ENCODE measurements at regions of chr1 and their contacts with region 1.

Region 1: GRCh38 chr1:165339164-165339563 is 17.4 kb downstream of the LMX1A start:
- DNase-seq: no peak
- H3K4me3 ChIP-seq: no peak overlapping the region
- H3K27ac ChIP-seq: no peak overlapping the region
- H3K4me1 ChIP-seq: no peaks in the 10 kb centered on the region
- H3K27me3 ChIP-seq: peaks cover 0 to 5% of the 10 kb centered on the region in 2 donors
- CTCF ChIP-seq: no peak
- POLR2A ChIP-seq: no peak

Region 2: DNA sequence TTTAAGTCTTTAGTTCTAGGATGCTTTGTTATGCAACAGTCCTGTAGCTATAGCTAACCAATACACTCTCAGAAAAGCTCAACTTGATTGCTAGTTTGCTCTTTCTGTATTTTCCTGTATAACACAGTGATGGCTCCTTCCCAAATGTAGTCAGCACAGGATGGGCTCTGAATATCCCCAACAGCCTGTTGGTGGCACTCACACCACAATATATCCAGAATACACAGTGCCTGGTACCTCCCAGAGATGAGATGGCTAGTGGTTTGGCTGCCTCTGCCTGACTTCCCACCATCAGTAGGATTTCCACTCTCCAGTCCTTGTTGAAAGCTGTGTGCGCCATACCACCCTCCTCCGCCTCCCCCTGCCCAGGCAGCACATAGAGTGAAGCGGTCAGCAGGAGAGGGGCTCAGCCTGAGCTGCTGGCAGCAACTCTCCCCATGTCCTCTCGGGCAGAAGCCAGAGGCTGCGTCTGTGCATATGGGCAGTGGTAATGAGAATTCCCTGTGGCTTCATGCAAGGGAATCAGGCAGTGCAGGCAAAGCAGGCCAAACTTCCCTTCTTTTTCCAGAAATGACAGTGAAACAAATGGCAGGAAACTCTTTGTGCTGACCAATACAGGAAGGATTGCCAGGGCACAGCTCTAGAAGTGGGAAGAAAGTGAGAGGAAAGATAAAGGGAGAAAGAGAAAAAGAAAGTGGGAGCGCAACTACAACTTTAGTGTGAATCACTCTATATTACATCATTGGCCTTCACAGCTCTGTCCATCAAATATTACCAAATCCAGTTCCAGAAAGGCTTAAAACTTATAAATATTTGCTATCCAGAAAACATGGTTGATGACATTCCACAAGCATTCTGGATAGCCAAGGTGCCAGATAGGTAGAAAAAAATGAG is 32.4 kb before region 1 on chr1:
- intact Hi-C with region 1: loop called (anchors 1 kb)
- DNase-seq: no peak
- H3K4me3 ChIP-seq: no peak overlapping the region
- H3K27ac ChIP-seq: no peak overlapping the region
- H3K4me1 ChIP-seq: no peaks in the 10 kb centered on the region
- H3K27me3 ChIP-seq: no peaks in the 10 kb centered on the region
- CTCF ChIP-seq: no peak
- POLR2A ChIP-seq: no peak

Measured in breast epithelium (tissue), 4 donors.